ENCODE measurements at regions of chr9 and their contacts with region 1.

Region 1: GRCh38 chr9:99104459-99105151 is at the start of gene TGFBR1:
- DNase-seq: peak; percentile 96
- H3K4me3 Mint-ChIP-seq: peak within 1 kb of the TSS; percentile 85
- H3K27ac Mint-ChIP-seq: peak within 1 kb of the TSS; percentile 93
- H3K4me1 Mint-ChIP-seq: peaks cover 73% of the 10 kb centered on the region
- H3K27me3 Mint-ChIP-seq: no peaks in the 10 kb centered on the region
- total RNA-seq, gene TGFBR1: 57.4 to 58.5 TPM

Region 2: GRCh38 chr9:98998441-98999151 is 106.0 kb before region 1 on chr9:
- CTCF ChIA-PET with region 1: interaction called, 26 read pairs
- POLR2A ChIA-PET with region 1: interaction called, 11 read pairs
- DNase-seq: peak; percentile 63
- H3K4me3 Mint-ChIP-seq: no peak overlapping the region
- H3K27ac Mint-ChIP-seq: no peak overlapping the region
- H3K4me1 Mint-ChIP-seq: peaks cover 24% of the 10 kb centered on the region
- H3K27me3 Mint-ChIP-seq: peaks cover 22% of the 10 kb centered on the region

Region 3: DNA sequence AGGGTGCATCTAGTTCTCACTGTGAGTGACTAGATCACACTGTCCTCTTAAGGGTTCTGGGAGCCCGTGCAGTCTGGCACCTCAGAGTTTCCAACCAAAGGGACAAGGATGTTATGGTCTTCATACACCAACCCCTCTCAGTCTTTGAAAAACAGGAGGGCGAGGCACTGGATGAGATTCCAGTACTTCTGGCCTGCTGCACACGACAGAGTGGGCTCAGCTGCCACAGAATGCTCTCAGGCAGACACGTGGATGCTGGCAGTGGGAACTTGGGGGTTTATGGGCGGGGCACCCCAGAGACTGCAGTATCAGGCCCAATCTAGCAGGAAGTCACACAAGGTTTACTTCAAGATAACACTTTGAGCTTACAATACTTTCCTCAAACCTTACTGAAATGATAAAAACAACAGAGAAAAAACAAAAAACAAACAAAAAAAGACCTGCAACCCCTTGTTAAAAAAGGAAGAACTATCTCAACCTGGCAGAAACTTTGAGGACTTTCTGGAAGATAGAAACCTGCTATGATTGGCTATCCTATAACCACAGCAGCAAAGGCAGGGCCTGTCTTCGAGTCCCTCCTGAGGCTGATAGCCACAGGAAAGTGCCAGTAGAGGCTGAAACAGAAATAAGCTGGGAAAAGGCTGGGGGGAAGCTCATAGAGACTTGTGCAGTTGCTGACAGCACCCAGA is 28.0 kb before region 1 on chr9:
- CTCF ChIA-PET with region 1: interaction called, 7 read pairs
- POLR2A ChIA-PET with region 1: interaction called, 10 read pairs
- DNase-seq: peak; percentile 68
- H3K4me3 Mint-ChIP-seq: peak overlapping the region; percentile 5
- H3K27ac Mint-ChIP-seq: peak overlapping the region; percentile 95
- H3K4me1 Mint-ChIP-seq: peaks cover 36% of the 10 kb centered on the region
- H3K27me3 Mint-ChIP-seq: peaks cover 4% of the 10 kb centered on the region

Region 4: DNA sequence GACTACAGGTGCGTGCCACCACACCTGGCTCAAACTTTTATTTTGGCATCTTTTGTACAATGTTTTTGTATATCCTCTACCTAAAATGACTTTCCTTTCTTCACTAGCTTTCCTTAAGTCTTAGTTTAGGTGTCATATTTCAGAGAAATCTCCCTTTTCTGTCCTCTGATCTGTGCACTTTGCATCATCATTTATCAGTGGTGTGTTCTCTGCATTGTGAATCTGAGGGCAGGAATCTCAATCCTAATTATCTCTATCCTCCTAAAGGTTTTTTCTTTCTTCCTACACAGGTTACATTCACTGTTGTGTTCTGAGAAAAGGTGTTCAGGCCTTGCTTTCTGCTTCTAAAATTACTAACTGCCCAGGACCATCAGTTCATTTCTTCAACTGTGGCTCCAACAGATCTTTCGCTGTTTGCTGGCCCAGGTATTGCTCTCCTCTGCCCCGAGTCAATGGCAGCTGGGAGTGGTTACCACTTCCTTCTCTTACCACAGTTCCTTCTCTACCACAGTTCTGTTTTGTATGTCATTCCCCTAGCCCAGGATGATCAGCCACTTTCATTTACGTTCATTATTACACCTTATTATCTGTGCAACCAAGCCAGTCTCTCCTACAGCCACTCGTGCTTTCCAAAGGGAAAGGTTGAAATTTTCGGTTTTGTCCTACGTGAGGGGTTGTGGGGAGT is 14.3 kb after region 1 on chr9:
- CTCF ChIA-PET with region 1: interaction called, 23 read pairs
- POLR2A ChIA-PET with region 1: interaction called, 23 read pairs
- DNase-seq: peak; percentile 74
- H3K4me3 Mint-ChIP-seq: peak overlapping the region; percentile 62
- H3K27ac Mint-ChIP-seq: peak overlapping the region; percentile 91
- H3K4me1 Mint-ChIP-seq: peaks cover 66% of the 10 kb centered on the region
- H3K27me3 Mint-ChIP-seq: no peaks in the 10 kb centered on the region

Region 5: GRCh38 chr9:99140685-99141314 is 36.2 kb after region 1 on chr9:
- CTCF ChIA-PET with region 1: interaction called, 19 read pairs
- POLR2A ChIA-PET with region 1: interaction called, 6 read pairs
- DNase-seq: peak; percentile 48
- H3K4me3 Mint-ChIP-seq: no peak overlapping the region
- H3K27ac Mint-ChIP-seq: no peak overlapping the region
- H3K4me1 Mint-ChIP-seq: peaks cover 31% of the 10 kb centered on the region
- H3K27me3 Mint-ChIP-seq: no peaks in the 10 kb centered on the region

Region 6: GRCh38 chr9:99169982-99170761 is 65.6 kb after region 1 on chr9:
- CTCF ChIA-PET with region 1: no interaction called
- POLR2A ChIA-PET with region 1: no interaction called
- DNase-seq: no peak
- H3K4me3 Mint-ChIP-seq: no peak overlapping the region
- H3K27ac Mint-ChIP-seq: no peak overlapping the region
- H3K4me1 Mint-ChIP-seq: peaks cover 29% of the 10 kb centered on the region
- H3K27me3 Mint-ChIP-seq: peaks cover 3% of the 10 kb centered on the region

Region 7: DNA sequence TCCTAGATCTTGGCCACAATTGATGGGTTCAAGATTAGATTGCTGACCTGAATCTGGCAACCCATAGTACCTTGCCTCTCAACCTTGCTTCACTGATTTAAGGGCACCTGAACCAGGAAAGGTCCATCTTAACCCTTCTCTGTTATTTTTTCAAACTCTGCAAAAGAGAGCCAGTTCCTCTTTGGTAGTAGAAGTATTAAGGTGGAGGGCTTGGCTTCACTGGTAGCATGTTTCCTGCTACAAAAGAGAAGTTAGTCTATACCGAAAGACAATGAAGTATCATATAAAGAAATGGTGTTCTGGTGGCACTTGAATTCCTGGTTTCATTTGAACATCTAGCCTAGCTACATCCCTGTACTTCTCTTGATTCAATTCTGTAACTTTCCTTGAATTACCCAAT is 108.6 kb after region 1 on chr9:
- CTCF ChIA-PET with region 1: no interaction called
- POLR2A ChIA-PET with region 1: no interaction called
- DNase-seq: no peak
- H3K4me3 Mint-ChIP-seq: no peak overlapping the region
- H3K27ac Mint-ChIP-seq: no peak overlapping the region
- H3K4me1 Mint-ChIP-seq: peaks cover 7% of the 10 kb centered on the region
- H3K27me3 Mint-ChIP-seq: peaks cover 12% of the 10 kb centered on the region